ENCODE measurements at regions of chr7 and their contacts with region 1.

Region 1: GRCh38 chr7:1065263-1066260 is 21.2 kb downstream of the GPR146 start:
- DNase-seq: peak; percentile 83
- ATAC-seq: peak; percentile 73
- H3K4me3 Mint-ChIP-seq: peak overlapping the region; percentile 73
- H3K27ac Mint-ChIP-seq: no peak overlapping the region
- H3K4me1 Mint-ChIP-seq: peaks cover 43% of the 10 kb centered on the region
- H3K27me3 Mint-ChIP-seq: peaks cover 5% of the 10 kb centered on the region
- CTCF ChIP-seq: peak; percentile 67

Region 2: DNA sequence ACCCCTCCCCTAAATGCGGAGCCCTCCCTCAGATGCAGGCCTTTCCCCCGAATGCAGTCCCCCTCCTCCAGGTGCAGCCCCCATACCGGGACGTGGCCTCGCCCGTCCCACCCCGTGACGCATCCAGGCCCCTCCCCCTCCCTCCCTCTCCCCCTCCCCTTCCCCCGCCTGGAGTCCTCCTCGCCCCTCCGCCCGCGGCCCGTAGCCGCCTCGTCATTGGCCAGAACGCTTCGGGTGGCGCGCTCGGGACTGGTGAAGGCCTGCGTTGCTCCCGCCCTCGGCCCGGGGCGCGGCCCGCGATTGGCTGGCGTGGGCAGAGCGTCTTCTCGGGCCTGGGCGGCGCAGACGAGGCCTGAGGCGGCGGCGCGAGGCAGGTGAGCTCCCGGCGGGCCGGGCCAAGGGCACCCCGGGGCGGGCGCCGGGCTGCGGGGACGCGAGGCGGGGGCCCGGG is 249.2 kb before region 1 on chr7:
- CTCF ChIA-PET with region 1: no interaction called
- POLR2A ChIA-PET with region 1: no interaction called
- intact Hi-C with region 1: loop called (anchors 10 kb)
- DNase-seq: peak; percentile 94
- ATAC-seq: peak; percentile 92
- H3K4me3 Mint-ChIP-seq: peak overlapping the region; percentile 81
- H3K27ac Mint-ChIP-seq: no peak overlapping the region
- H3K4me1 Mint-ChIP-seq: peaks cover 64% of the 10 kb centered on the region
- H3K27me3 Mint-ChIP-seq: no peaks in the 10 kb centered on the region
- CTCF ChIP-seq: no peak

Region 3: GRCh38 chr7:923108-924041 is 142.2 kb before region 1 on chr7:
- CTCF ChIA-PET with region 1: no interaction called
- POLR2A ChIA-PET with region 1: no interaction called
- intact Hi-C with region 1: loop called (anchors 1 kb)
- DNase-seq: peak; percentile 72
- ATAC-seq: peak; percentile 85
- H3K4me3 Mint-ChIP-seq: peak overlapping the region; percentile 77
- H3K27ac Mint-ChIP-seq: peak overlapping the region; percentile 84
- H3K4me1 Mint-ChIP-seq: peaks cover 42% of the 10 kb centered on the region
- H3K27me3 Mint-ChIP-seq: no peaks in the 10 kb centered on the region
- CTCF ChIP-seq: no peak

Region 4: GRCh38 chr7:1004018-1004852 is 61.3 kb before region 1 on chr7:
- CTCF ChIA-PET with region 1: interaction called, 331 read pairs
- POLR2A ChIA-PET with region 1: interaction called, 8 read pairs
- intact Hi-C with region 1: loop called (anchors 1 kb)
- DNase-seq: peak; percentile 70
- ATAC-seq: peak; percentile 81
- H3K4me3 Mint-ChIP-seq: peak overlapping the region; percentile 64
- H3K27ac Mint-ChIP-seq: peak overlapping the region; percentile 70
- H3K4me1 Mint-ChIP-seq: peaks cover 38% of the 10 kb centered on the region
- H3K27me3 Mint-ChIP-seq: no peaks in the 10 kb centered on the region
- CTCF ChIP-seq: no peak

Region 5: GRCh38 chr7:1028031-1028770 is 37.4 kb before region 1 on chr7:
- CTCF ChIA-PET with region 1: interaction called, 55 read pairs
- POLR2A ChIA-PET with region 1: interaction called, 148 read pairs
- intact Hi-C with region 1: loop called (anchors 1 kb)
- DNase-seq: peak; percentile 85
- ATAC-seq: peak; percentile 38
- H3K4me3 Mint-ChIP-seq: peak overlapping the region; percentile 91
- H3K27ac Mint-ChIP-seq: no peak overlapping the region
- H3K4me1 Mint-ChIP-seq: peaks cover 61% of the 10 kb centered on the region
- H3K27me3 Mint-ChIP-seq: no peaks in the 10 kb centered on the region
- CTCF ChIP-seq: no peak

Region 6: GRCh38 chr7:1086588-1087464 is 21.3 kb after region 1 on chr7:
- CTCF ChIA-PET with region 1: interaction called, 8 read pairs
- POLR2A ChIA-PET with region 1: interaction called, 4 read pairs
- intact Hi-C with region 1: loop called (anchors 2 kb)
- DNase-seq: peak; percentile 77
- ATAC-seq: peak; percentile 91
- H3K4me3 Mint-ChIP-seq: peak overlapping the region; percentile 83
- H3K27ac Mint-ChIP-seq: peak overlapping the region; percentile 70
- H3K4me1 Mint-ChIP-seq: peaks cover 33% of the 10 kb centered on the region
- H3K27me3 Mint-ChIP-seq: no peaks in the 10 kb centered on the region
- CTCF ChIP-seq: peak; percentile 95

Region 7: DNA sequence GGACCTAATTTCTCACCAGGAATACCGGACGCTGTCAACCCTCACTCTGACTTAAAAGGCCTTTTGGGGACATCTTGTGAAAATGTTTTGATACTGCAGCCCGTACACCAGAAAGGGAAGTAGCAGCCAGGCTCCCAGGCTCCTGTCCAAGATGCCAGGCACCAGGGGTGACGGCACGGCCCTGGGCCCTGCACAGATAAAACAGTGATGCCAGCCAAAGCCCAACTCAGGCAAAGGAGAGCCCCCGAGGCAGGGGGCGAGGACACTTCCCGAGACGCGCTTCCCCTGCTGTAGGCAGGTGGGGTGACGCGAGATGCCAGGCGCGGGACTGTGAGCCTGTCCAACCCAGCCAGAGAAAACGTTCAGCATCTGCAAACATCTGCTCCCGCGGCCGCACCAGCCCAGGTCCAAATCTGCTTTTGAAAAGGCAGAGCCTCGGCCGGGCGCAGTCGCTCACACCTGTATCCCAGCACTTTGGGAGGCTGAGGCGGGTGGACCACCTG is 78.8 kb after region 1 on chr7:
- CTCF ChIA-PET with region 1: interaction called, 10 read pairs
- POLR2A ChIA-PET with region 1: interaction called, 8 read pairs
- intact Hi-C with region 1: loop called (anchors 1 kb)
- DNase-seq: no peak
- ATAC-seq: peak; percentile 43
- H3K4me3 Mint-ChIP-seq: peak overlapping the region; percentile 24
- H3K27ac Mint-ChIP-seq: peak overlapping the region; percentile 35
- H3K4me1 Mint-ChIP-seq: peaks cover 41% of the 10 kb centered on the region
- H3K27me3 Mint-ChIP-seq: no peaks in the 10 kb centered on the region
- CTCF ChIP-seq: no peak

Region 8: GRCh38 chr7:1331561-1332488 is 266.3 kb after region 1 on chr7:
- CTCF ChIA-PET with region 1: no interaction called
- POLR2A ChIA-PET with region 1: no interaction called
- intact Hi-C with region 1: no loop called
- DNase-seq: no peak
- ATAC-seq: no peak
- H3K4me3 Mint-ChIP-seq: no peak overlapping the region
- H3K27ac Mint-ChIP-seq: no peak overlapping the region
- H3K4me1 Mint-ChIP-seq: no peaks in the 10 kb centered on the region
- H3K27me3 Mint-ChIP-seq: peaks cover 8% of the 10 kb centered on the region
- CTCF ChIP-seq: no peak

Measured in activated B cell treated with CpG ODN at 0.5 μM for 24 hours (primary cell).